ENCODE measurements at regions of chr1 and their contacts with region 1.

Region 1: DNA sequence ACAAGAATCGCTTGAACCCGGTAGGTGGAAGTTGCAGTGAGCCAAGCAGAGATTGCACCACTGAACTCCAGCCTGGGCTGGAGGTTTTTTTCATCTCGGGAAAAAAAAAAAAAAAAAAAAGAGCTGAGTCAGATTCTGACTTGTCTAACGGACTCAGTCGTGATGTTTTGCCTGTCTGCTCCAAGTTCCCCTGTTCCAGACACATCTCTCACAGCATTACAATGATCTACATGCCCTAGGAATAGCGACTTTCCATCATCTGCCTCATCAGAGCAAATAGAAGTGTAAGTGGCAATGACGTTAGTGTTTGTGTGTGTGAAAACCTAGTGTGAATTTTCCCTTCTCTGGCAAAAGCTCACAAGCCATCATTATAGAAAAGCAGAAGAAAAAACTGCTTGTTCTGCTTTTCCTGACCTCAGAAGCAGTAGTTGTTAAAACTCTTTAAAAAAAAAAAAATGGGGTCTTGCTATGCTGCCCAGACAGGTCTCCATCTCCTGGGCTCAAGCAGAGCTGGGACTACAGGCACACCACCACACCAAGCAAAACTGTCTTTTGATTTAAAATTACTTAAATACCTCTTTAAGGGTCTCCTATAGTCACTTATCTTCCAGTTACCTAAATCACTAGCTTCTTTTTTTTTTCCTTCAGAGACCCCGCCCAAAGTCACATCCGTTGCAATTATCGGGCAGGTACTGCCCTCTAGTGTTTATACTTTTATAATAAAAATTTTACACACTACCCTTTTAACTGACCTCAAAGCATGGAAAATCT is 37.3 kb downstream of the PLEKHO1 start:
- DNase-seq: no peak
- ATAC-seq: peak; percentile 91
- H3K4me3 ChIP-seq: no peak overlapping the region
- H3K27ac ChIP-seq: no peak overlapping the region; the same call in 1 of the 2 replicates
- H3K4me1 ChIP-seq: peaks cover 4% of the 10 kb centered on the region
- H3K27me3 ChIP-seq: no peaks in the 10 kb centered on the region
- CTCF ChIP-seq: peak; percentile 26 to 39 (median 38); a peak in 4 of 6 replicates
- EP300 ChIP-seq: peak; percentile 43 to 80; a peak in 3 of 4 replicates
- POLR2A ChIP-seq: no peak
- RAD21 ChIP-seq: peak; percentile 71

Region 2: DNA sequence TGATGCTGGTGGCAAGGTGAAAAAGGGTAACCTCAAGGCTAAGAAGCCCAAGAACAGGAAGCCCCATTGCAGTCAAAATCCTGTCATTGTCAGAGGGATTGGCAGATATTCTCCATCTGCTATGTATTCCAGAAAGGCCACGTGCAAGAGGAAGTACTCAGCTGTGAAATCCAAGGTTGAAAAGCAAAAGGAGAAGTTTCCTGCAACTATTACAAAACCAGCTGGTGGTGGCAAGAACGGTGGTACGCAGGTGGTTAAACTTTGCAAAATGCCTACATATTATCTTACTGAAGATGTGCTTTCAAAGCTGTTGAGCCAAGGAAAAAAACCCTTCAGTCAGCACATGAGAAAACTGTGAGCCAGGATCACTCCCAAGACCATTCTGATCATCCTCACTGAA is 133.0 kb before region 1 on chr1:
- CTCF ChIA-PET with region 1: interaction called, 12 read pairs
- POLR2A ChIA-PET with region 1: interaction called, 3 read pairs
- RAD21 ChIA-PET with region 1: interaction called, 5 read pairs
- SMC1A ChIA-PET with region 1: interaction called, 10 read pairs
- in situ Hi-C with region 1: no loop called
- intact Hi-C with region 1: no loop called
- DNase-seq: no peak
- ATAC-seq: no peak
- H3K4me3 ChIP-seq: no peak overlapping the region
- H3K27ac ChIP-seq: no peak overlapping the region
- H3K4me1 ChIP-seq: peaks cover 4% of the 10 kb centered on the region
- H3K27me3 ChIP-seq: no peaks in the 10 kb centered on the region
- CTCF ChIP-seq: no peak
- EP300 ChIP-seq: no peak
- POLR2A ChIP-seq: no peak
- RAD21 ChIP-seq: no peak

Region 3: GRCh38 chr1:150072959-150073358 is 114.0 kb before region 1 on chr1:
- CTCF ChIA-PET with region 1: interaction called, 79 read pairs
- POLR2A ChIA-PET with region 1: interaction called, 4 read pairs
- RAD21 ChIA-PET with region 1: interaction called, 35 read pairs
- SMC1A ChIA-PET with region 1: interaction called, 32 read pairs
- in situ Hi-C with region 1: no loop called
- intact Hi-C with region 1: loop called (anchors 1 kb)
- DNase-seq: no peak
- ATAC-seq: peak; percentile 85
- H3K4me3 ChIP-seq: no peak overlapping the region
- H3K27ac ChIP-seq: no peak overlapping the region
- H3K4me1 ChIP-seq: no peaks in the 10 kb centered on the region
- H3K27me3 ChIP-seq: no peaks in the 10 kb centered on the region
- CTCF ChIP-seq: peak in 2 of 3 experiments; percentile 27 to 42; a peak in 2 of 6 replicates
- EP300 ChIP-seq: no peak
- POLR2A ChIP-seq: no peak
- RAD21 ChIP-seq: peak; percentile 42; the same call in 1 of the 2 replicates

Region 4: GRCh38 chr1:150127868-150128267 is 59.1 kb before region 1 on chr1:
- CTCF ChIA-PET with region 1: interaction called, 10 read pairs
- POLR2A ChIA-PET with region 1: interaction called, 3 read pairs
- RAD21 ChIA-PET with region 1: no interaction called
- SMC1A ChIA-PET with region 1: no interaction called
- in situ Hi-C with region 1: no loop called
- intact Hi-C with region 1: no loop called
- DNase-seq: no peak
- ATAC-seq: no peak
- H3K4me3 ChIP-seq: no peak overlapping the region
- H3K27ac ChIP-seq: no peak overlapping the region
- H3K4me1 ChIP-seq: no peaks in the 10 kb centered on the region
- H3K27me3 ChIP-seq: no peaks in the 10 kb centered on the region
- CTCF ChIP-seq: no peak
- EP300 ChIP-seq: no peak
- POLR2A ChIP-seq: no peak
- RAD21 ChIP-seq: no peak

Region 5: DNA sequence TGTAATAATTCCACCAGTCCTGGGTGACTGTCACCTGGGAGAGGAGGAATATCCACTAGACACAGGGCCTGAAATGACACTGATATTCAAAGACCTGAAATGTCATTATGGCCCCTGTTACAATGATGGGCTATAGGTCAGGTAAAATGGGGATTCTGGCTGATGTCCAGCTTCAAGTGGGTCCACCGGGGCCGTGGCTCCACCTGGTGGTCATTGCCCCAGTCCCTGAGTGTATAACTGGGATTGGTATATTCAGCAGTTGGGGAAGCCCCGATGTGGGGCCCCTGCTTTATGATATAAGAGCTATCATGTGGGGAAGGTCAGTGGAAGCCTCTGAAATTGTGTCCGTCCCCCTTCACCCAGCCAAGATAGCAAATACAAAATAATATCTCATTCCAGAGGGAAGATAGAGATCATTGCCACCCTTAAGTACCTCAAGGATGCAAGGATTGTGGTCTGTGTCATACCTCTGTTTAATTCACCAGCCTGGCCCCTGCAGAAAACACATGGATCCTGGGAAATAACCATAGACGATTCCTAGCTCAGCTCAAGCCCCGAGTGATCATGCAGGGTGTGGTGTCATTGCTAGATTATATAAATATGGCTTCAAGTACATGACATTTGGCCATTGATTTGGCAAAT is 17.9 kb before region 1 on chr1:
- CTCF ChIA-PET with region 1: interaction called, 78 read pairs
- POLR2A ChIA-PET with region 1: interaction called, 6 read pairs
- RAD21 ChIA-PET with region 1: interaction called, 32 read pairs
- SMC1A ChIA-PET with region 1: interaction called, 33 read pairs
- in situ Hi-C with region 1: no loop called
- intact Hi-C with region 1: no loop called
- DNase-seq: no peak
- ATAC-seq: peak; percentile 78
- H3K4me3 ChIP-seq: no peak overlapping the region
- H3K27ac ChIP-seq: no peak overlapping the region
- H3K4me1 ChIP-seq: peaks cover 28% of the 10 kb centered on the region
- H3K27me3 ChIP-seq: no peaks in the 10 kb centered on the region
- CTCF ChIP-seq: peak; percentile 77 to 88 (median 87)
- EP300 ChIP-seq: no peak
- POLR2A ChIP-seq: no peak
- RAD21 ChIP-seq: peak; percentile 94

Measured in GM12878 (cell line).